ENCODE measurements at regions of chr12 and their contacts with region 1.

Region 1: DNA sequence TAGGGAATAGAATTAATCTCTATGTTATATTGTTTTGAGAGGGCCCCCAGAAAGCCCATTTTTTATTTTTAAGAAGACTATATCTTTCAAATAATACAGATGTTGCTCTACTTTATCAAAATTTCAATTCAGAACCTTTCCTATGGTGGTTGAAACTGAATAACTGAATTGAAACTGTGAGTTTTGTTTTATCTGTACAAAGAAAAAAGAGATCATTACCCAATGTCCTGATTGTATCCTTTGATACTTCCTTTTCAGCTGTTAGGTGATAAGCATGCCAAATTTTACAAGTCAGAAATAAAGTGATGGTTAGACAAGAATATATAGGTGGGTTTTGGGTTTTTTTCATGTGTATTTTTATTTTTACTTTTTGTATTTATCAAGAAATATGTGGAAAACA is 1293.1 kb upstream of the USP15 start:
- DNase-seq: no peak
- H3K4me3 ChIP-seq: no peak overlapping the region
- H3K27ac ChIP-seq: no peak overlapping the region
- H3K4me1 ChIP-seq: no peaks in the 10 kb centered on the region
- H3K27me3 ChIP-seq: no peaks in the 10 kb centered on the region
- CTCF ChIP-seq: no peak

Region 2: DNA sequence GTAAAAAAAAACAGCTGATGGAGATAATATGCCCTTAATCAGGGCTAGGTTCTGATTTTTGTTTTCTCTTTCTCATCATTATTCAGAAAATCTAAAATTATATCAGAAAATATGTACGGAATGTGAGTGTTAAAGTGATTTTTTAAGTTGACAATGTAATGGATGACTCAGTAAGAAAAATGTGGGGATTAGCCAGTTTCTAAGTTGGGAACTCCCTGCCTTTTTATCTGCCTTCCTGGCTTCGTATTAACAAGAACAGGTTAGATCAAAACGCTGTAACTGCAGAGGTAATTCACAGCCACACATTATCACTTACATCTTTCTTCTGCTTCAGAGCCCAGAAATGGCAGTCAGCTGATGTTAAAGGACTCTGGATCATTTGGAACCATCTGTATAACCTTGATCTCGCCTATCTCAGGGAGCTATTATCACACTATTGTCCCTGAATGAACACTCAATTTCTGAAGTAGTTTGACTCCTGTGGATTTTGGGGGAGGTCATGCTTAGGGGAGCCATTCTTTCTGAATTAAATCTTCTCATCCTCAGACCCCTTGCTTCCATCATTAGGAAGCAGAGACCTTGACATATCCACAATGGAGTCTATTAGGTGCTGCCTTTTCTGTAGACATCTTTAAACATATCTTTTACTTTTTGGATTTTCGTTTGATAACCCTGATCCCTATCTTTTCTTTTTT is 1507.0 kb before region 1 on chr12:
- CTCF ChIA-PET with region 1: no interaction called
- POLR2A ChIA-PET with region 1: no interaction called
- intact Hi-C with region 1: loop called (anchors 10 kb)
- DNase-seq: no peak
- H3K4me3 ChIP-seq: no peak overlapping the region
- H3K27ac ChIP-seq: no peak overlapping the region
- H3K4me1 ChIP-seq: no peaks in the 10 kb centered on the region
- H3K27me3 ChIP-seq: no peaks in the 10 kb centered on the region
- CTCF ChIP-seq: no peak

Region 3: GRCh38 chr12:60977966-60978365 is 10.8 kb after region 1 on chr12:
- CTCF ChIA-PET with region 1: no interaction called
- POLR2A ChIA-PET with region 1: no interaction called
- intact Hi-C with region 1: no loop called
- DNase-seq: peak; percentile 3
- H3K4me3 ChIP-seq: no peak overlapping the region
- H3K27ac ChIP-seq: no peak overlapping the region
- H3K4me1 ChIP-seq: no peaks in the 10 kb centered on the region
- H3K27me3 ChIP-seq: no peaks in the 10 kb centered on the region
- CTCF ChIP-seq: peak; percentile 40

Region 4: GRCh38 chr12:61037792-61038191 is 70.7 kb after region 1 on chr12:
- CTCF ChIA-PET with region 1: no interaction called
- POLR2A ChIA-PET with region 1: no interaction called
- intact Hi-C with region 1: no loop called
- DNase-seq: no peak
- H3K4me3 ChIP-seq: no peak overlapping the region
- H3K27ac ChIP-seq: no peak overlapping the region
- H3K4me1 ChIP-seq: no peaks in the 10 kb centered on the region
- H3K27me3 ChIP-seq: no peaks in the 10 kb centered on the region
- CTCF ChIP-seq: no peak

Region 5: DNA sequence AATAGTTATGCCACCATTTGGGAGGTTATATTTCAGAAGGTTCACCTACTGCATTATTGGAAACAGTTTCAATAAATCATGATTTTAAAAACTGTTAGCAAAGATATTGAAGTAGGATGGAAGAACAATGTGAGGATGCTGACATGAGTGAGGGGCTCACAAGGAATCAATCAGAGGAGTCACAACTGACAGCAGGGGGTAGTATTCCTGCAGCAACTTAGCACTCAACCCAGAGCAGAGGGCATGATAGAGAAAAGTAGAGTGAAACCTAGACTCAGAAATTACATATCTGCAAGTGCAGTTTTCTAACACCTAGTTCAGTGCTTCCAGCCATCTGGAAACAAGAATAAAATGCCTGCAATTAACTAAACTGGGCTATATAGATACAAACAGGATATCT is 520.6 kb after region 1 on chr12:
- CTCF ChIA-PET with region 1: no interaction called
- POLR2A ChIA-PET with region 1: no interaction called
- intact Hi-C with region 1: no loop called
- DNase-seq: no peak
- H3K4me3 ChIP-seq: no peak overlapping the region
- H3K27ac ChIP-seq: no peak overlapping the region
- H3K4me1 ChIP-seq: no peaks in the 10 kb centered on the region
- H3K27me3 ChIP-seq: no peaks in the 10 kb centered on the region
- CTCF ChIP-seq: no peak